ENCODE measurements at regions of chr16 and their contacts with region 1.

Region 1: DNA sequence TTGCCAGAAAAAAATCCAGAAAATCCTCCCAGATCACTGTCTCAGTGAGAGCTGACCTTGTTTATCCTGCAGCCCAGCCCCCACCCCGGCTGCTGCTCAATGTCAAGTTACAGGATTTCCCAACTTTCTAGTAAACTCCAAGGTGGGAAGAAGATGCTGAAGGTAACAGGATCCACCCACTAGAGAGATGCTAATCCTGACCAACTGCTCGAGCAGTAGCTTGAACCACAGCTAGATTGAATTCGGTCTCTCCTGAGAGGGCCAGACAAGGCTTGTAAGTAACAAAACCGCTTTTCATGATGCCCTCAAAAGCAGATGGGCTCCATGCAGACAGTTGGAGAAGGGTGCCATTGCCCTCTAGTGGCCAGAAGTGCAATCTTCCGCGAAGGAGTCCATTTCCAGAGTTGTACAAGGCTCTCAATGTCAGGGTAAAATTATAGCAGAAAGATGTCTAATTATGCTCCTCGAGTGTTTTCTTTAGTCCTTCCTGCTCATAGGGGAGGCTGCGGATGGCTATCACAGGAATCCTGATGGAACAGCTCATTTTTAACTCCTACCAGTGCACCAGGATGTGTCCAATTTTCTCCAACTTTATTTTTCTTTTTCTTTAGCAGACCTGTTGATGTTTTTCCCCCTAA is 3.9 kb downstream of the CDH11 start:
- ATAC-seq: peak; percentile 3 to 60 (median 51)
- H3K4me3 ChIP-seq: peak overlapping the region in 1 of 5 donors; percentile 1
- H3K27ac ChIP-seq: no peak overlapping the region
- H3K4me1 ChIP-seq: peaks cover 8 to 15% of the 10 kb centered on the region in 2 donors

Region 2: GRCh38 chr16:63461248-63461841 is 1656.6 kb before region 1 on chr16:
- in situ Hi-C with region 1: loop called in 4 of 9 experiments (anchors 25 kb)
- ATAC-seq: peak; percentile 30 to 80 (median 61)
- H3K4me3 ChIP-seq: no peak overlapping the region
- H3K27ac ChIP-seq: no peak overlapping the region
- H3K4me1 ChIP-seq: peaks cover 5 to 12% of the 10 kb centered on the region in 2 donors

Region 3: GRCh38 chr16:64711026-64711425 is 406.9 kb before region 1 on chr16:
- in situ Hi-C with region 1: loop called in 1 of 9 experiments (anchors 25 kb)
- ATAC-seq: no peak
- H3K4me3 ChIP-seq: no peak overlapping the region
- H3K27ac ChIP-seq: no peak overlapping the region
- H3K4me1 ChIP-seq: peaks cover 0 to 5% of the 10 kb centered on the region in 2 donors

Region 4: GRCh38 chr16:64892835-64893785 is 224.8 kb before region 1 on chr16:
- in situ Hi-C with region 1: loop called in 1 of 9 experiments (anchors 25 kb)
- ATAC-seq: peak; percentile 81 to 97 (median 85)
- H3K4me3 ChIP-seq: no peak overlapping the region
- H3K27ac ChIP-seq: peak overlapping the region; percentile 50 to 68
- H3K4me1 ChIP-seq: peaks cover 20 to 55% of the 10 kb centered on the region in 2 donors

Region 5: DNA sequence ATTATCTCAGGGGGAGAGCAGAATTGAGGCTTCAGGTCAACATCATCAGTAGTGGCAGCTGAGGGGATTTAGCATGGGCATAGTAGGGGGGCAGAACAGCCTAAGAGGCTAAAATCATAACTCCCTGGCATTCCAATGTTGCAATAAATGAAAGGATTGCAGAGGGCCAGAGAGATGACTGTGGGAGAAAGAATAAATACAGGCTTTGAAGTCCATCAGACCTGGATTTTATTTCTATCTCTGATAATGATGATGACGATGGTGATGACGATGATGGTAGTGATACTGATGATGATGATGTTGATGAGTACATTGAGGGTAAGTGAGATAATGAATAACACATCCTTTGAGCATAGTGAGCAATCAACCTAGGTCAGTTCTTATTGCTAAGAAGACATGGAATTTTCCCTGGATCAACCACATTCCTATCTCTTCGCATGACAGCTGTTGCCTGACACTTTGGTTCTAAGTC is 111.3 kb after region 1 on chr16:
- in situ Hi-C with region 1: no loop called
- ATAC-seq: no peak
- H3K4me3 ChIP-seq: no peak overlapping the region
- H3K27ac ChIP-seq: no peak overlapping the region
- H3K4me1 ChIP-seq: peaks cover 0 to 3% of the 10 kb centered on the region in 2 donors

Measured in motor neuron (in vitro differentiated cells).